ENCODE measurements at regions of chr11 and their contacts with region 1.

Region 1: DNA sequence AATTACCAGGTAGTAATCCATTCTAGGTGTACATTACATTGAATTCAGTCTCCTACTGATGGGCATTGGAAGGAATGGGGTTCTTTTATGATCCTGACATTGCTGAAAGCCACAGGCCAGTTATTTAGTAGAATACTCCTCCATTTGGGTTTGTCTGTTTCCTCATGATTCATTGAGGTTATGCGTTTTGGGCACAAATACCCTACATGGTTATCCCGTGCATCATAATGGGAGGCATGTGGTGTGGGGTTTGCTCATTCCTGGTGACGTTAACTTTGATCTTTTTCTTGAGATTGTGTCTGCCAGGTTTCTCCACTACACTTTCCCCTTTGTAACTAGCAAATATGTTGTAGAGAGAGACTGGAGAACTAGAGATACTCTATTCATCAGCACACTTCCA is 5.5 kb downstream of the FOLR3 start:
- DNase-seq: peak; percentile 61
- H3K4me3 Mint-ChIP-seq: peak overlapping the region; percentile 29
- H3K27ac Mint-ChIP-seq: peak overlapping the region; percentile 87
- H3K4me1 Mint-ChIP-seq: peaks cover 30% of the 10 kb centered on the region
- H3K27me3 Mint-ChIP-seq: no peaks in the 10 kb centered on the region
- CTCF ChIP-seq: no peak

Region 2: DNA sequence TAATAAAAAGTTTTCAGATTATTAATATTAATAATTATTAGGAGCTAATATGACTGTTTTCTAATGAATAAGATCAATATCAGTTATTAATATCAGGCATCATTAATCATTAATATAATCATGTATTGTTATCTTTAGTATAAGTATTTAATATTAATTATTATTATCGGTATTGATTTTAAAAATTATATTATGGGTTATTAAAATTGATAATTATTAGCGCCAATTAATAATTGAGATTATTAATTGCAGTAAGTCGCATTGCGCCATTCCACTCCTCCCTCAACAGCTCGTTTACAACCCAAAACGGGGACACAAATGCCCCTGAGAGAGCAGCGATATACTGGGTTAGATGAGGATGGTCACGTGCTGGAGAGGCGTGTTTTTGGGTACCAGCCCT is 232.8 kb before region 1 on chr11:
- CTCF ChIA-PET with region 1: no interaction called
- POLR2A ChIA-PET with region 1: no interaction called
- intact Hi-C with region 1: no loop called
- DNase-seq: no peak
- H3K4me3 Mint-ChIP-seq: no peak overlapping the region
- H3K27ac Mint-ChIP-seq: no peak overlapping the region
- H3K4me1 Mint-ChIP-seq: no peaks in the 10 kb centered on the region
- H3K27me3 Mint-ChIP-seq: no peaks in the 10 kb centered on the region
- CTCF ChIP-seq: no peak

Region 3: DNA sequence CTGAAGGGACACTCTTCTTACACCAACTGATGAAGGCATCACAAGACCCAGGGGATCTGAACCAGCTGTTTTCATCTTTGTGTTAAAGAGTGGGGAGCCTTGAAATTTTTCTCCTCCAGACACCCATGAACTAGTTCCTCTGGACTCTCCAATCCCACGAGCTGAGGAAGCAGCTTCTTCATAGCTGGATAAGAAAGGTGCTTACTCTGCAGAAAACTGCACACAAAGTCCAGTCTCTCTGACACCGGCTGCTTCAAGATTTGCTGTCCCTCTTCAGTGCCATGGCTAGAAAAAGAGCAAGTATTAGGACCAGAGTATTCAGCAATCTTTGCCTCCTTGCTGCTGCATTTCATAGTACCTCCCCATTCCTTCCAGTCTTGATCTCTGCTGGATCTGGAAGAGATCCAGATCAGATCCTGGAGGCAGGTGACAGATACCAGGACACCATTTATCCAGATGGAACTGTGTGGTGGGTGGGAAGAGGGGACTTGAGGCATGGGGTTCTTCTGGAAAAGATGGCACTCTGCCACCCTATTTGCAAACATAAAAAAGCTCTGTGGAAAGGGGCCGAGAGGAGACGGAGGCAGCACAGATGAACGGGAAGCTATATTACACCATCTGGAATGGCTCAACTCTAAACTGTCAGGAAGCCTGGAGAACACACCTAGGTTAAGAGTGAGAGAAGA is 116.9 kb before region 1 on chr11:
- CTCF ChIA-PET with region 1: interaction called, 20 read pairs
- POLR2A ChIA-PET with region 1: interaction called, 19 read pairs
- intact Hi-C with region 1: loop called (anchors 1 kb)
- DNase-seq: no peak
- H3K4me3 Mint-ChIP-seq: no peak overlapping the region
- H3K27ac Mint-ChIP-seq: peak overlapping the region; percentile 19
- H3K4me1 Mint-ChIP-seq: peaks cover 4% of the 10 kb centered on the region
- H3K27me3 Mint-ChIP-seq: no peaks in the 10 kb centered on the region
- CTCF ChIP-seq: no peak

Region 4: DNA sequence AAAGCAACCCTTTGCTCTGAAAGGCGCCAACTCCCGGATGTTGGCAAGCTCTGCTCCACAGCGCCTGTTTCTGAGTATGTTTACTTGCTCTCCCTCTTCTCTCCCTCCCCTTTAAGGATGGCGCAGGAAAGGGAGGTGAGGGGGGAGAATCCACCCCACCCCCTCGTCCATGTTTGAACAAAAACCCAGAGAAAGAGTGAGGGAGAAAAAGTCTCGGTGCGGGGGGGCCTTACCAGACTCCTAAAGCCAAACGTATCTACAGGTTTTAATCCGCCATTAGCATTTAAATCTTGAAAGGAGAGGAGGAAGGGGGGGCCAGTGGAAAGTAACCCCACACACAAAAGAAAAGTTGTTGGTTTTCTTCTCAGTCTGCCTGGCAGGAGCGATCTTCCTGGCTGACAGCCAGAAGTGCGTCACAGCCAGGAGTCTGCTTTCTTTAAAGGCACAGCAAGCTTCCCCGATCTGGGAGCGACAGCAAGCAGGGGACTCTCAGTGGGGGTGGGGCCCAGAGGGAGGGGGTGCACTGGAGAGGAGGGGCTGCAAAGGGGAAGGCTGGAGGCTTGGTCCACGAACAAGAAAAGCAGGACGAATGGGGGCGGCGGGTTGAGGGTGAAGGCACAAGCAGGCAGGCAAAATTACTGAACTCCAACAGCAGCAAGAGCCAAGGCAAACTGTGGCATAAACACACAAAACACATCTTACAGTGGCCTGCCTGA is 100.2 kb before region 1 on chr11:
- CTCF ChIA-PET with region 1: interaction called, 18 read pairs
- POLR2A ChIA-PET with region 1: interaction called, 54 read pairs
- intact Hi-C with region 1: no loop called
- DNase-seq: peak; percentile 91
- H3K4me3 Mint-ChIP-seq: no peak overlapping the region
- H3K27ac Mint-ChIP-seq: no peak overlapping the region
- H3K4me1 Mint-ChIP-seq: peaks cover 26% of the 10 kb centered on the region
- H3K27me3 Mint-ChIP-seq: no peaks in the 10 kb centered on the region
- CTCF ChIP-seq: no peak

Region 5: DNA sequence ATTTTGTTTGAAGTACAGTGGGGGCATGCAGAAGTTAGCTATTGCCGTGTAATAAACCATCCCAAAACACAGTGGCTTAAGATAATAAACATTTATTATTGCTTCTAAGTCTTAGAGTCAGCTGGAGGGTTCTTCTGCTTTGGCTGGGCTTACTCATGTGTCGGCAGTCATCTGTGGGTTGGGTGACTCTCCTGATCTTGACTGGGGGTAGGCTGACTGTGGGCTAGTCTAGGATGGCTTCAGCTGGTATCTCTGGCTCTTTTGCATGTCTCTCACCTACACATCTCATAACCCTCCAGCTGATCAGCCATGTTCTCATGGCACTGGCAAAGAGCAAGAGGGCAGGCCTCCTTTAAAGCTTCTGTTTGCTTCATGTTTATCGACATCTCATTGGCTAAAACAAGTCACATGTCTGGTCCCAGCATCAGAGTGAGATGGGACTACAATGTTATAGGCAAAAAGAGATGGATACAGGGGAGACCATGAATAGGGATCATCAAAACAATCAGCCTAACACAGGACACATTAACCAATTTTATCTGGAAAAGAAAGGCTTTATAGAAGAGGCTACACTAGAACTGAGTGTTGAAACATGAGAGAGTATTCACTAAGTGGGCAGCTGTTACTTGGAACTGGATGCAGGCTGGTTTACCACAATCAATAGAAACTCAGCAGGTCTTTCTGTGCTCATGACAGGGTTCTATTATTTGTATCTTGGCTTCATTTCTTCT is 55.3 kb before region 1 on chr11:
- CTCF ChIA-PET with region 1: interaction called, 17 read pairs
- POLR2A ChIA-PET with region 1: interaction called, 7 read pairs
- intact Hi-C with region 1: no loop called
- DNase-seq: no peak
- H3K4me3 Mint-ChIP-seq: no peak overlapping the region
- H3K27ac Mint-ChIP-seq: no peak overlapping the region
- H3K4me1 Mint-ChIP-seq: peaks cover 23% of the 10 kb centered on the region
- H3K27me3 Mint-ChIP-seq: no peaks in the 10 kb centered on the region
- CTCF ChIP-seq: no peak

Region 6: GRCh38 chr11:72102946-72103753 is 37.9 kb before region 1 on chr11 and contains the start of gene LAMTOR1:
- CTCF ChIA-PET with region 1: interaction called, 28 read pairs
- POLR2A ChIA-PET with region 1: interaction called, 39 read pairs
- intact Hi-C with region 1: loop called (anchors 1 kb)
- DNase-seq: peak; percentile 98
- H3K4me3 Mint-ChIP-seq: peak within 1 kb of the TSS; percentile 100
- H3K27ac Mint-ChIP-seq: peak within 1 kb of the TSS; percentile 100
- H3K4me1 Mint-ChIP-seq: peaks cover 43% of the 10 kb centered on the region
- H3K27me3 Mint-ChIP-seq: no peaks in the 10 kb centered on the region
- CTCF ChIP-seq: peak; percentile 29
- total RNA-seq, gene LAMTOR1: 76.9 and 82.4 TPM in 2 replicates

Region 7: DNA sequence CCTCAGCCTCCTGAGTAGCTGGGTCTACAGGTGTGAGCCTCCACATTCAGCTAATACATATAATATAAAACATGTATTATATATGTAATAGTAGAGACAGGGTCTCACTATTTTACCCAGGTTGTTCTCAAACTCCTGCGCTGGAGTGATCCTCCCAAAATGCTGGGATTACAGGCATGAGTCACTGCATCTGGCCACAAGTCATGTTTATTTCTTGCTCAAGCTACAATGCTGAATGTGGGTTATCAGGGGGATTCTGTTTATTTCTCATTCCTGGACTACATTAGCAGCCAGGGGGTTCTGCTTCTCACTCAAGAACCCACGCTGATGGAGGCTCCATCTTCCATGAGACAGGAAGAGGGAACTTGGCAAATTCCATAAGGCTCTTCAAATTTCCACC is 19.3 kb after region 1 on chr11:
- CTCF ChIA-PET with region 1: interaction called, 46 read pairs
- POLR2A ChIA-PET with region 1: interaction called, 14 read pairs
- intact Hi-C with region 1: no loop called
- DNase-seq: no peak
- H3K4me3 Mint-ChIP-seq: no peak overlapping the region
- H3K27ac Mint-ChIP-seq: no peak overlapping the region
- H3K4me1 Mint-ChIP-seq: no peaks in the 10 kb centered on the region
- H3K27me3 Mint-ChIP-seq: no peaks in the 10 kb centered on the region
- CTCF ChIP-seq: no peak

Region 8: GRCh38 chr11:72222907-72223614 is 82.0 kb after region 1 on chr11:
- CTCF ChIA-PET with region 1: interaction called, 6 read pairs
- POLR2A ChIA-PET with region 1: interaction called, 10 read pairs
- intact Hi-C with region 1: no loop called
- DNase-seq: peak; percentile 94
- H3K4me3 Mint-ChIP-seq: peak overlapping the region; percentile 87
- H3K27ac Mint-ChIP-seq: peak overlapping the region; percentile 39
- H3K4me1 Mint-ChIP-seq: peaks cover 8% of the 10 kb centered on the region
- H3K27me3 Mint-ChIP-seq: peaks cover 5% of the 10 kb centered on the region
- CTCF ChIP-seq: no peak

Region 9: DNA sequence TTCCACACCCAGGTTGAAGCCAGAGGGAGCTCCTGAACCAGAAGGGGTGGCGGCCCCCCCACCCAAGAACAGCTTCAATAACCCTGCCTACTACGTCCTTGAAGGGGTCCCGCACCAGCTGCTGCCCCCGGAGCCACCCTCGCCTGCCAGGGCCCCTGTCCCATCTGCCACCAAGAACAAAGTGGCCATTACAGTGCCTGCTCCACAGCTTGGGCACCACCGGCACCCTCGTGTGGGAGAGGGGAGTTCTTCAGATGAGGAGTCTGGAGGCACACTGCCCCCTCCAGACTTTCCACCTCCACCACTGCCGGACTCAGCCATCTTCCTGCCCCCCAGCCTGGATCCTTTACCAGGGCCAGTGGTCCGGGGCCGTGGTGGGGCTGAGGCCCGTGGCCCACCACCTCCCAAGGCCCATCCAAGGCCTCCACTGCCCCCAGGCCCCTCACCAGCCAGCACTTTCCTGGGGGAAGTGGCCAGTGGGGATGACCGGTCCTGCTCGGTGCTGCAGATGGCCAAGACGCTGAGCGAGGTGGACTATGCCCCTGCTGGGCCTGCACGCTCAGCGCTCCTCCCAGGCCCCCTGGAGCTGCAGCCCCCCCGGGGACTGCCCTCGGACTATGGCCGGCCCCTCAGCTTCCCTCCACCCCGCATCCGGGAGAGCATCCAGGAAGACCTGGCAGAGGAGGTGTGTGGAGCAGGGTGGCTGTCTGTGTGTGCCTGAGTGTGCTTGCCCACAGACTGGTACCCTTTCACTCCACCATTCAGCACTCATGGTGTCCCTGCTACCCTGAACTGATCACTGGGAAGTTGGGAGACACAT is 96.3 kb after region 1 on chr11:
- CTCF ChIA-PET with region 1: no interaction called
- POLR2A ChIA-PET with region 1: no interaction called
- intact Hi-C with region 1: no loop called
- DNase-seq: no peak
- H3K4me3 Mint-ChIP-seq: no peak overlapping the region
- H3K27ac Mint-ChIP-seq: no peak overlapping the region
- H3K4me1 Mint-ChIP-seq: peaks cover 9% of the 10 kb centered on the region
- H3K27me3 Mint-ChIP-seq: no peaks in the 10 kb centered on the region
- CTCF ChIP-seq: no peak

Region 10: DNA sequence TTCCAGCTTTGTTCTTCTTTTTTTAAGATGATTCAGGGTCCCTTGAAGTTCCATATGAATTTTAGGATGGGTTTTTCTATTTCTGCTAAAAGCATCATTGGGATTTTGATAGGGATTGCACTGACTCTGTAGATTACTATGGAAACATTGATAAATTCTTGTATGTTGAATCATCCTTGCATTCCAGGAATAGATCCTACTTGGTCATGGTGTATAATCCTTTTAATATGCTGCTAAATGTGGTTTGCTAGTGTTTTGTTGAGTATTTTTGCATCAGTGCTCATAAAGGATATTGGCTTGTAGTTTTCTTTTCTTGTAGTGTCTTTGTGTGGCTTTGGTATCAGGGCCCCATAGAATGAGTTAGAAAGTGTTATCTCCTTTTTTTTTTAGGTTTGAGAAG is 137.8 kb after region 1 on chr11:
- CTCF ChIA-PET with region 1: no interaction called
- POLR2A ChIA-PET with region 1: no interaction called
- intact Hi-C with region 1: no loop called
- DNase-seq: no peak
- H3K4me3 Mint-ChIP-seq: no peak overlapping the region
- H3K27ac Mint-ChIP-seq: no peak overlapping the region
- H3K4me1 Mint-ChIP-seq: peaks cover 9% of the 10 kb centered on the region
- H3K27me3 Mint-ChIP-seq: peaks cover 13% of the 10 kb centered on the region
- CTCF ChIP-seq: no peak

Region 11: DNA sequence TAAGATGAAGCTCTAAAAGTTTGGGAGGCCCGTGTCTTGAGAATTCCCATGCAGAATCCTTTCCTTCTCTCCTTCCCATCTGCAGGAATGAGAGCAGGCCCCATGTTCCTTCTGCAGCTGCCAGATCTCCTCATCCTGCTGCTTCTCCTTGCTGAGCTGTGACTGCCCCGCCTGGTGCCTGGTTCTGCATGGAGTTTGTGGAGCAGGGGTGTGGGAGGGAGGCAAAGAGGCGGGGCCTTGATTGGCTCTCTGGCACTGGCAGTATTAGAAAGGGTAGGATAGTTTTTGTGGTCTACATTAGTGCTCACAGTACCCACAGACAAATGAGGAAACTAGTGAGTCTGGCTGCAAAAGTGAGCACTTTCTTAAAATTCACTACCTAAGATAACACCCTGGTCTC is 384.4 kb after region 1 on chr11:
- CTCF ChIA-PET with region 1: no interaction called
- POLR2A ChIA-PET with region 1: no interaction called
- intact Hi-C with region 1: no loop called
- DNase-seq: no peak
- H3K4me3 Mint-ChIP-seq: no peak overlapping the region
- H3K27ac Mint-ChIP-seq: no peak overlapping the region
- H3K4me1 Mint-ChIP-seq: peaks cover 6% of the 10 kb centered on the region
- H3K27me3 Mint-ChIP-seq: no peaks in the 10 kb centered on the region
- CTCF ChIP-seq: no peak

Measured in MCF 10A (cell line).